Caco-2 (cell line): ENCODE measurements at regions of chr5 and their contacts with region 1.

Region 1: DNA sequence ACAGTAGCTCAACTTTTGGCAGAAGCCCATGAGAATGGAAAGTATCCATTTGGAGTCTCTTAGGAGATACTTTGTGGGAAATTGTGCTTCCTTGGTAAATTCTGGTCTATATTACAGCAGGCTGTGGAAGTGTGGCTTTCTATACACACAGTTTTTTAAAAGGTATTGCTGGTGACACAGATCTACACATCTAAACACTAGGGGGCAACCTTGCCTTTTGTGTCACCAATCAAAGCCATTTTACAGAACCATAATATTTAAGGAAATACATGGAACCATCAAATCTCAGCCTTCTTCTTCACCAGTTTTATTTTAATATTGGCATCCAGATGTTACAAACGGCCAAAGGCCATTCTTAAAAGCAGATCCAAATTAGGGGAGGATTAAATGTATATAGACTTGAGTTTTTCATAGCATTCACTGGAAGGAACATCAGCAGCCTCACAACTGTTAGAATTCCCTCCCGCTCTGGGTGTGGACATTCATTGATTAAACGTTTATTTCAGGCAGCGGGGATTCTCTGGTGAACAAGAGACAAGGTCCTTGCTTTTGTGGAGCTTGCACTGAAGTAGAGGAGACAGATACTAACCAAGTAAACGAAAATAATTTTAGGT is 132.4 kb upstream of the EPB41L4A start:
- DNase-seq: peak in 1 of 2 experiments; percentile 58
- H3K4me3 ChIP-seq: no peak overlapping the region
- H3K4me3 Mint-ChIP-seq: no peak overlapping the region
- H3K27ac Mint-ChIP-seq: no peak overlapping the region
- H3K4me1 ChIP-seq: no peaks in the 10 kb centered on the region
- H3K4me1 Mint-ChIP-seq: no peaks in the 10 kb centered on the region
- H3K27me3 ChIP-seq: no peaks in the 10 kb centered on the region
- H3K27me3 Mint-ChIP-seq: peaks cover 6% of the 10 kb centered on the region
- CTCF ChIP-seq: peak; percentile 69 to 71

Region 2: DNA sequence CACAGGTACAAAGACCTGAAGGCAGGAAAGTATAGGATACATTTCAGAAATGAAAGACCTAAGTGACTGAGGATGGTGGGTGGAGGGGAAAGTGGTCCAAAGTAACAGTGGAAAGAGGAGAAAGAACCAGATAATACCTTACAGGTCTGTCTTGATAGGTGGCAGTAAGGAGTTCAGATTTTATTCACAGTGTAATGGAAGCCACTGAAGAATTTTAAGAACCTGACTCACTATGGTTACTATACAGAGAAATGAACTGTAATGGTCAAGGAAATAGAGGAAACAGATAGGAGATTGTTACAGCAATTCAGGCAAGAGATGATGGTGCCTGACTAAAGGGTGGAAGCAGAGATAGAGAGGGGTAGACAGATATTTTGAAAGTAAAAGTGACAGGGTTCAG is 179.0 kb before region 1 on chr5:
- CTCF ChIA-PET with region 1: no interaction called
- POLR2A ChIA-PET with region 1: no interaction called
- intact Hi-C with region 1: no loop called
- DNase-seq: no peak
- H3K4me3 ChIP-seq: no peak overlapping the region
- H3K4me3 Mint-ChIP-seq: no peak overlapping the region
- H3K27ac Mint-ChIP-seq: no peak overlapping the region
- H3K4me1 ChIP-seq: no peaks in the 10 kb centered on the region
- H3K4me1 Mint-ChIP-seq: no peaks in the 10 kb centered on the region
- H3K27me3 ChIP-seq: no peaks in the 10 kb centered on the region
- H3K27me3 Mint-ChIP-seq: peaks cover 14% of the 10 kb centered on the region
- CTCF ChIP-seq: no peak

Region 3: GRCh38 chr5:112604732-112605630 is 53.5 kb after region 1 on chr5:
- CTCF ChIA-PET with region 1: interaction called, 4 read pairs
- POLR2A ChIA-PET with region 1: no interaction called
- intact Hi-C with region 1: loop called (anchors 1 kb)
- DNase-seq: peak; percentile 63 to 66
- H3K4me3 ChIP-seq: no peak overlapping the region
- H3K4me3 Mint-ChIP-seq: no peak overlapping the region
- H3K27ac Mint-ChIP-seq: no peak overlapping the region
- H3K4me1 ChIP-seq: 0 out of 2 replicates have a peak, but pooled peaks cover 3% of the 10 kb centered on the region
- H3K4me1 Mint-ChIP-seq: peaks cover 9% of the 10 kb centered on the region
- H3K27me3 ChIP-seq: no peaks in the 10 kb centered on the region
- H3K27me3 Mint-ChIP-seq: peaks cover 6% of the 10 kb centered on the region
- CTCF ChIP-seq: peak; percentile 59 to 79

Region 4: GRCh38 chr5:112691758-112692157 is 140.2 kb after region 1 on chr5:
- CTCF ChIA-PET with region 1: no interaction called
- POLR2A ChIA-PET with region 1: no interaction called
- intact Hi-C with region 1: loop called (anchors 1 kb)
- DNase-seq: peak; percentile 62 to 73
- H3K4me3 ChIP-seq: no peak overlapping the region
- H3K4me3 Mint-ChIP-seq: no peak overlapping the region
- H3K27ac Mint-ChIP-seq: no peak overlapping the region
- H3K4me1 ChIP-seq: peaks cover 4% of the 10 kb centered on the region; the same call in 1 of the 2 replicates
- H3K4me1 Mint-ChIP-seq: peaks cover 14% of the 10 kb centered on the region
- H3K27me3 ChIP-seq: no peaks in the 10 kb centered on the region
- H3K27me3 Mint-ChIP-seq: peaks cover 6% of the 10 kb centered on the region
- CTCF ChIP-seq: peak; percentile 61 to 80

Region 5: DNA sequence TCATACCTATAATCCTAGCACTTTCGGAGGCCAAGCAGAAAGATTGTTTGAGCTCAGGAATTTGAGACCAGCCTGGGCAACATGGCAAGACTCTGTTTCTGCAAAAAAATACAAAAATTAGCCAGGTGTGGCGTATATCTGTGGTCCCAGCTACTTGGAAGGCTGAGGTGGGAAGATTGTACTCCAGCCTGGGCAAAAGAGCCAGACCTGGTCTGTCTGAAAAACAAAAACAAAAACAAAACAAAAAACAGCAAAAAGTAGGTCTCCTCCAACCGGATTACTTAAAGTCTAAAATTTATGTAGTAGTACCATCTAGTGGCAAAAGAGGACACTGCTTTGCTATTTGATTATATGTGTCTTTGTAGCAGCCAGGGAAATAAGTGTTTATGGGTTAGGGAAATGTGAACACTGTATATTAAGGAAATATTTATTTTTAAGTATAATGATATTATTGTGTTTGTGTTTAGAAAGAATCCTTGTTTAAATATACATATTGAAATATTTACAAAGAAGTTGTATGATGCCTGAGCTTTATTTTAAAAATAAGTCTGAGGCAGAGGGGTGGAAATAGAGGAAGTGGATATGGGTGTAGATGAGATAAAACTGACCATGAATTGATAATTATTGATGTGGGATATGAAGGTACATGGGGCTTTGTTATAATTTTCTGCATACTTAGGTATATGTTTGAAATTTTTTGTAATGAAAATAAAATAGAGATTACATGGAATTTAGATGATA is 206.1 kb after region 1 on chr5:
- CTCF ChIA-PET with region 1: no interaction called
- POLR2A ChIA-PET with region 1: no interaction called
- intact Hi-C with region 1: loop called (anchors 1 kb)
- DNase-seq: peak in 1 of 2 experiments; percentile 43
- H3K4me3 ChIP-seq: no peak overlapping the region
- H3K4me3 Mint-ChIP-seq: no peak overlapping the region
- H3K27ac Mint-ChIP-seq: no peak overlapping the region
- H3K4me1 ChIP-seq: no peaks in the 10 kb centered on the region
- H3K4me1 Mint-ChIP-seq: no peaks in the 10 kb centered on the region
- H3K27me3 ChIP-seq: no peaks in the 10 kb centered on the region
- H3K27me3 Mint-ChIP-seq: no peaks in the 10 kb centered on the region
- CTCF ChIP-seq: peak; percentile 61 to 78

Region 6: DNA sequence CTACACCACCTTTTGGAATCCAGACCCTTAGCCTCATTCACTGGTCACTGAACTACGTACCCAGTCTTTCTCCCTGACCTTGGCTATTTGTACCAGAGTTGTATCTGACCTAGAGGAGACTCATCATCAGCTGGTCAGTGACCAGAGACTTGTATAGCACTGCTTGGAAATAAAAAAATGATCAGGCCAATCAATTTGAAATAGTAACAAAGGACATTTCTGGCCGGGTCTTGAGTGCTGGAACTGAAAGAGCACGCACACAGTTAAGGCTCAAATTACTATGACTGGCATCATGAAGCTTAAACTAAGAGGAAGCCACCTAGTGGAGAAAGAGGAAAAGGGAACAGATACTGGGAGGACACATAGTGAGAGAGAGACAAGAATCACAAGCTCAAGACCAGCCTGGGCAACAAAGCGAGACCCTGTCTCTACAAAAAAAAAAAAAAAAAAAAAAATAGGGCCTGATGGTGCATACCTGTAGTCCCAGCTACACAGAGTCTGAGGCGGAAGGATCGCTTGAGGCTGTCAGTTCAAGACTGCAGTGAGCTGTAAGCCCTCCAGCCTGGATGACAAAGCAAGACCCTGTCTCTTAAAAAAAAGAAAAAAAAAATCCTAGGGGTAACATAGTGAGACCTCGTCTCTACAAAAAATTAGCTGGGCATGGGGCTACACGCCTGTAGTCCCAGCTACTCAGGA is 296.7 kb after region 1 on chr5:
- CTCF ChIA-PET with region 1: interaction called, 6 read pairs
- POLR2A ChIA-PET with region 1: no interaction called
- intact Hi-C with region 1: loop called (anchors 1 kb)
- DNase-seq: peak in 1 of 2 experiments; percentile 57
- H3K4me3 ChIP-seq: no peak overlapping the region
- H3K4me3 Mint-ChIP-seq: no peak overlapping the region
- H3K27ac Mint-ChIP-seq: no peak overlapping the region
- H3K4me1 ChIP-seq: no peaks in the 10 kb centered on the region
- H3K4me1 Mint-ChIP-seq: no peaks in the 10 kb centered on the region
- H3K27me3 ChIP-seq: no peaks in the 10 kb centered on the region
- H3K27me3 Mint-ChIP-seq: no peaks in the 10 kb centered on the region
- CTCF ChIP-seq: peak; percentile 47 to 74

Region 7: GRCh38 chr5:112921833-112922817 is 370.6 kb after region 1 on chr5 and contains the start of gene REEP5:
- CTCF ChIA-PET with region 1: no interaction called
- POLR2A ChIA-PET with region 1: no interaction called
- intact Hi-C with region 1: loop called (anchors 10 kb)
- DNase-seq: peak; percentile 89 to 92
- H3K4me3 ChIP-seq: peak within 1 kb of the TSS; percentile 99
- H3K4me3 Mint-ChIP-seq: peak within 1 kb of the TSS; percentile 100
- H3K27ac Mint-ChIP-seq: peak within 1 kb of the TSS; percentile 99
- H3K4me1 ChIP-seq: peaks cover 10% of the 10 kb centered on the region
- H3K4me1 Mint-ChIP-seq: peaks cover 25% of the 10 kb centered on the region
- H3K27me3 ChIP-seq: no peaks in the 10 kb centered on the region
- H3K27me3 Mint-ChIP-seq: no peaks in the 10 kb centered on the region
- CTCF ChIP-seq: peak; percentile 72 to 81
- total RNA-seq, gene REEP5: 88.2 and 99.3 TPM in 2 replicates

Region 8: GRCh38 chr5:113250341-113250953 is 698.9 kb after region 1 on chr5:
- CTCF ChIA-PET with region 1: no interaction called
- POLR2A ChIA-PET with region 1: no interaction called
- intact Hi-C with region 1: no loop called
- DNase-seq: no peak
- H3K4me3 ChIP-seq: no peak overlapping the region
- H3K4me3 Mint-ChIP-seq: no peak overlapping the region
- H3K27ac Mint-ChIP-seq: no peak overlapping the region
- H3K4me1 ChIP-seq: no peaks in the 10 kb centered on the region
- H3K4me1 Mint-ChIP-seq: no peaks in the 10 kb centered on the region
- H3K27me3 ChIP-seq: no peaks in the 10 kb centered on the region
- H3K27me3 Mint-ChIP-seq: peaks cover 36% of the 10 kb centered on the region
- CTCF ChIP-seq: no peak

Region 9: DNA sequence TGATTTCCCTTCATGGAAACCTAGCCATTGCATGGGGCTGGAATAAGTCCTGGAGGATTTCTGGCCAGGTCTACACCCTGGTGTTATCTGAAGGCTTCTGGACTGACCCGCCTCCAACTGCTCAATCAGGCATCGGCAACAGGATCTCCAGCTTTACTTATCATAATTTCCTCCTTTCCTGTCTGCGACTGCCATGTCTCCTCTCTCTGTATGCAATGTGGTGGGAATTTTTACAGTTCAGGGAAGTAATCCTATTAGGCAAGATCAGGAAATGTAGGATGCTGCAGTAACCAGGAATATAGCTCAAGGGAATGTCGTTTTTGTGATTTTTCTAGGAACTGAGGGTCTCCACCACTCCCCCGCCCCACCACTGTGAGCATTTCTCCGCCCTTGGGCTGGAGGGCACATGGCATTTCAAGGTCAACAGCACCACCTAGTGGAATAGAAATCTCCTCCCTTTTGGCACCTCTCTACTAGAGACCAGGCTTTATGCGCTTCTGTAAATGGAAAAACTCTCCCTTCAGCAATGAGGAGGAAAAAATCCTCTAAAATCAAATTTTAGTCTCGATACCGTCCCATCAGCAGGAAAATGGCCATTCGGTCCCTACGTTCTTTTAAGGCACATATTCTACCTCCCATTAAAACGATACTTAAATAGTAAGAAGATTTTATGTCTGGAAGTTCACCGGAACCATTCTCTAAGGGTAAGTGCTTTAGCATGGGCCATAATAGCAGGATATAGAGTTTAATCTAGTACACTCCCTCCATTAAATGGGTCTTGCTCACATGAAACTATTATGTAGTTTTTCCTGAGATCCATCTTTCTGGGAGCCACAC is 1055.0 kb after region 1 on chr5:
- CTCF ChIA-PET with region 1: no interaction called
- POLR2A ChIA-PET with region 1: no interaction called
- intact Hi-C with region 1: loop called (anchors 1 kb)
- DNase-seq: peak; percentile 44 to 64
- H3K4me3 ChIP-seq: no peak overlapping the region
- H3K4me3 Mint-ChIP-seq: no peak overlapping the region
- H3K27ac Mint-ChIP-seq: no peak overlapping the region
- H3K4me1 ChIP-seq: no peaks in the 10 kb centered on the region
- H3K4me1 Mint-ChIP-seq: peaks cover 1% of the 10 kb centered on the region
- H3K27me3 ChIP-seq: no peaks in the 10 kb centered on the region
- H3K27me3 Mint-ChIP-seq: peaks cover under 1% of the 10 kb centered on the region
- CTCF ChIP-seq: peak; percentile 70 to 71